A673 (cell line): ENCODE measurements at regions of chr9 and their contacts with region 1.

Region 1: DNA sequence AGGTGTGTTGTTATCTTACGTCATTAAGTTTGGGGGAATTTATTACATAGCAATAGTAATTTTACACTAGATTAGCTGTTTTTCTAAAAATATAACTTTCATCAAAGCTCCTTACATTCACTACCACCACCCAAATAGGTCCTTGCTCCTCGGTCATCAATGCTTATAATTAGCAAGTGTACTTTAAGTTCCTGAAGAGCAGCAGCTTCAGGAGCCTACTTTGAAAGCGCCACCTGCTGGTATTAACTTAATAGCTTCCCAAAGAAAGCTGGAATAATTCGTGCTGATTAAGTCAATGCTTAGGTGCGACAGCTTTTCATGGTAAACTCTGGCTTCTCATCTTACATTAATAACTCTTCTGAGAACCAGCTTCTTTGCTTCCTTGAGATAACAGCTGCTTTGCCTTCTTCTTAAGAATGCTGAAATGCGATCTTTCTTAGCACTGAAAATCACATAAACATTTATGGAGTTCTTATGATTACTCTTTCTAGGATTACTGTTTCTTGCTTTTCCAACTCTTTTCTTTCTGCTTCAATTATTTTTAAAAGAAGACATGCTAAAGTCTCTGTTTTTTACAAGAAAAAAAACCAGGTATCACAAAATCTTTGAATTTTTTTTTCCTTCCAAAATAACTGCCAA is 10.0 kb upstream of the C5 start:
- DNase-seq: peak; percentile 86
- H3K4me3 ChIP-seq: no peak overlapping the region
- H3K27ac ChIP-seq: no peak overlapping the region
- H3K4me1 ChIP-seq: peaks cover 5% of the 10 kb centered on the region
- H3K27me3 ChIP-seq: no peaks in the 10 kb centered on the region
- CTCF ChIP-seq: peak; percentile 88

Region 2: GRCh38 chr9:120755827-120756434 is 304.2 kb before region 1 on chr9:
- CTCF ChIA-PET with region 1: interaction called, 14 read pairs
- POLR2A ChIA-PET with region 1: no interaction called
- intact Hi-C with region 1: loop called (anchors 2 kb)
- DNase-seq: peak; percentile 65
- H3K4me3 ChIP-seq: no peak overlapping the region
- H3K27ac ChIP-seq: no peak overlapping the region
- H3K4me1 ChIP-seq: peaks cover 18% of the 10 kb centered on the region
- H3K27me3 ChIP-seq: no peaks in the 10 kb centered on the region
- CTCF ChIP-seq: peak; percentile 89

Region 3: DNA sequence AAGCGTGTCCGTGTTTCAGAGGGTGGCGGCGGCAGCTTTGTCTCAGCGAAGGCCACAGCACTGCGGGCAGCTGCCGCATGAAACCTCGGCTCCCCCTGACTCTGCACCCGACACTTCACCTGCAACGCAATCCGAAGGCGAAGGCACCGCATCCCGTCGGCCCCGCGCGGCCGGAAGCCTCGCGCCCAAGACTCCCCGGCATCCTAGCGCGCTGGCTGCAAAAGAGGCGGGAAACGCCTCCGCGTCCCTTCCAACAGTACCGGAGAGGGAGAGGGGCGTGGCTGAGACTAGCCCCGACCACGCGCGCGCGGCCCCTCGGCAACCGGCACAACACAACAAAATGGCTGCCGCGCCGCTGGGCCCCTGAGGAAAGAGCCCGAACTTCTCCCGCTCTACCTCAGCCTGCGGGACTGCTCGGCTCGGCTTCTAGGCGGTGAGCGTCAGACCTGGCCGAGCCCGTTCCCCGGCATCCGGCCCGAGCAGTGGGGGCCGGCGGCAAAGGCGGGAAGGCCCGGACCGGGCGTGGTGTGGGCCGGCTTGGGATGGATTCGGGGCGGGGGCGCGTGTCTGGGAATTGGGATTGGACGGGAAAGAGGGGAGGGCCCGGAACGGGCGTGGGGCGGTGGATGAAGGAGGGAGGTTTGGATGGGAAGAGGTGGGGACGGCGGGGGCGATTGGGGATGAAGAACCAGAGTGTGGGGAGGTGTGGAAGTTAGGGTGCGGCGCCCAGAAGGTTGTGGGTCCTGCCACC is 14.7 kb after region 1 on chr9 and contains the start of gene CNTRL:
- CTCF ChIA-PET with region 1: interaction called, 12 read pairs
- POLR2A ChIA-PET with region 1: interaction called, 3 read pairs
- intact Hi-C with region 1: no loop called
- DNase-seq: peak; percentile 96
- H3K4me3 ChIP-seq: peak within 1 kb of the TSS; percentile 61
- H3K27ac ChIP-seq: peak within 1 kb of the TSS; percentile 89
- H3K4me1 ChIP-seq: peaks cover 28% of the 10 kb centered on the region
- H3K27me3 ChIP-seq: no peaks in the 10 kb centered on the region
- CTCF ChIP-seq: no peak
- total RNA-seq, gene CNTRL: 26.3 and 30.0 TPM in 2 replicates